Activated T-helper 1 cell treated with anti-CD3 and anti-CD28 coated beads, Interleukin-12 subunit alpha, Interleukin-12 subunit beta, Interleukin-2, Interleukin-4 antibody, amounts not matched to agents 30 ng/mL and 10 ng/mL and 1 ng/mL, durations not matched to agents 14 hours and 24 hours and 36 hours (primary cell): ENCODE measurements at regions of chr11 and their contacts with region 1.

Region 1: GRCh38 chr11:69238573-69239351 is 55.2 kb upstream of the MYEOV start:
- DNase-seq: no peak
- H3K4me3 Mint-ChIP-seq: peak overlapping the region; percentile 55
- H3K27ac Mint-ChIP-seq: peak overlapping the region; percentile 94
- H3K4me1 Mint-ChIP-seq: peaks cover 34% of the 10 kb centered on the region
- H3K27me3 Mint-ChIP-seq: peaks cover 6% of the 10 kb centered on the region

Region 2: GRCh38 chr11:69101115-69101791 is 137.5 kb before region 1 on chr11:
- intact Hi-C with region 1: loop called (anchors 2 kb)
- DNase-seq: peak; percentile 53
- H3K4me3 Mint-ChIP-seq: no peak overlapping the region
- H3K27ac Mint-ChIP-seq: no peak overlapping the region
- H3K4me1 Mint-ChIP-seq: no peaks in the 10 kb centered on the region
- H3K27me3 Mint-ChIP-seq: no peaks in the 10 kb centered on the region

Region 3: DNA sequence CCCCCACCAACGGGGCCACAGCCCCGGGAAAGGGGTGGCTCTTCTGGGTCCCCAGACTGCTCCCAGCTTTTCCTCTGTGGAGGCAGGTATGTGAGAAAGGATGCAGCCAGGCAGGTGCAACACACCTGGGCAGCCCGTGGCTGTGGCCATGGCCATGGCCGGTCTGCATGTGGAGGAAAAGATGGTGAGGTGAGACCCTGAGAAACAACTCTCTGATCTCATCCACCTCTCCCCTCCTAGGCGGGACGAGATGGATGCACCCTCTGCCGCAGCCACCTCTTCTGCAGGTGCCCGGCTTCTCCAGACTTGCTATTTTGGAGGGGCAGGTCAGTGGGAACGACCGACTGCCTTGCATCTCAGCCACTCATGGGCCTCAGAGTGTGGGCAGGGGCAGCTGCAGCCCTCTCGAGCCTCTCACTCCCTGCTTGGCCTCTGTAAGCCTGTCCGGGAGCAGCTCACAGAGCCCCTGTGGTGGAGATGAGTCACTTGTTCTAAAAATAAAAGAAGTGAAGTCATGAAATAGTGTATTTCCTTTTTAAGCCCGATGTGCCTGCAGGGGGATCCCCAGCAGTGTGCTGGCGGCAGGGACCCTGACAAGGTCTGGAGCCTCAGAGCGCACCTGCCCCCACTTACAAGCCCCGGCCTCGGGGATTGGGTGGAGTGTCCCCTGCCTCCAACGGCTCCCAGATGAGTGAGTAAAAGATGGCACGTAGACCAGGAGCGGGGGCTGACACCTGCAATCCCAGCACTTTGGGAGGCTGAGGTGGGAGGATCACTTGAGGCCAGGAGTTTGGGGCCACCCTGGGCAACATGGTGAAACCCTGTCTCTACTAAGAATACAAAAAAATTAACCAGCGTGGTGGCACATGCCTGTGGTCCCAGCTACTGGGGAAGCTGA is 72.3 kb before region 1 on chr11:
- intact Hi-C with region 1: loop called (anchors 2 kb)
- DNase-seq: peak; percentile 17
- H3K4me3 Mint-ChIP-seq: peak overlapping the region; percentile 67
- H3K27ac Mint-ChIP-seq: peak overlapping the region; percentile 90
- H3K4me1 Mint-ChIP-seq: peaks cover 24% of the 10 kb centered on the region
- H3K27me3 Mint-ChIP-seq: peaks cover 2% of the 10 kb centered on the region

Region 4: GRCh38 chr11:69296890-69297786 is 58.4 kb after region 1 on chr11:
- intact Hi-C with region 1: loop called (anchors 1 kb)
- DNase-seq: peak; percentile 77
- H3K4me3 Mint-ChIP-seq: peak overlapping the region; percentile 82
- H3K27ac Mint-ChIP-seq: peak overlapping the region; percentile 97
- H3K4me1 Mint-ChIP-seq: peaks cover 64% of the 10 kb centered on the region
- H3K27me3 Mint-ChIP-seq: peaks cover 6% of the 10 kb centered on the region

Region 5: DNA sequence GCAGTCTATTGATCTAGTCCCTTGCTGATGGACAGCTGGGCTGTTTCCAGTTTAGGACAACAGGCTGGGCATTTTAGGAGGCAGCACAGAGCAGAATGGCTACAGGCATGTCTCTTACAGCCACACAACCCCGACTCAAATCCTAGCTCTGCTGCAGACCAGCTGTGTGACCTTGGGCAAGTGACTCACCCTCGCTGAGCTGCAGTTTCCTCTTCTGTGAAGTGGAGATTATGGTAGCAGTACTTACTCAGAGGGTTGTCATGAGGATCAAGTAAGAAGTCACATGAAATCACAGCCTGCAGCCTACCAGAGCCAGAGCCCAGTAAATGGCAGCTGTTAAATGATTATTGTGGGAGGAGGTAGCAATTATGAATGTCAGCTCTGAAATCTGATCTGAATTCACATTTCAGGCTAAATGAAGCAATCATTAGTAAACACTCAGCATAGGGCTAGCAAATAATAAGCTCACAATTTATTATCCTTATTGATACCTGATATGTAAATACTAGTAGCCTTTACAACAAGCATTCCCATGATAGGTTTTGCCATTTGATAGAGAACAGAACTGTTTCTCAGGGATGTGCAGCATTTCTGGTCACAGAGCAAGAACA is 114.1 kb after region 1 on chr11:
- intact Hi-C with region 1: loop called (anchors 5 kb)
- DNase-seq: no peak
- H3K4me3 Mint-ChIP-seq: no peak overlapping the region
- H3K27ac Mint-ChIP-seq: peak overlapping the region; percentile 43
- H3K4me1 Mint-ChIP-seq: peaks cover 10% of the 10 kb centered on the region
- H3K27me3 Mint-ChIP-seq: peaks cover 1% of the 10 kb centered on the region

Region 6: GRCh38 chr11:69384548-69385460 is 146.0 kb after region 1 on chr11:
- intact Hi-C with region 1: no loop called
- DNase-seq: no peak
- H3K4me3 Mint-ChIP-seq: no peak overlapping the region
- H3K27ac Mint-ChIP-seq: no peak overlapping the region
- H3K4me1 Mint-ChIP-seq: no peaks in the 10 kb centered on the region
- H3K27me3 Mint-ChIP-seq: peaks cover 4% of the 10 kb centered on the region

Region 7: GRCh38 chr11:69417146-69418085 is 178.7 kb after region 1 on chr11:
- intact Hi-C with region 1: no loop called
- DNase-seq: no peak
- H3K4me3 Mint-ChIP-seq: no peak overlapping the region
- H3K27ac Mint-ChIP-seq: no peak overlapping the region
- H3K4me1 Mint-ChIP-seq: no peaks in the 10 kb centered on the region
- H3K27me3 Mint-ChIP-seq: no peaks in the 10 kb centered on the region

Region 8: GRCh38 chr11:69642913-69643632 is 404.3 kb after region 1 on chr11:
- intact Hi-C with region 1: loop called (anchors 2 kb)
- DNase-seq: peak; percentile 62
- H3K4me3 Mint-ChIP-seq: peak overlapping the region; percentile 73
- H3K27ac Mint-ChIP-seq: no peak overlapping the region
- H3K4me1 Mint-ChIP-seq: no peaks in the 10 kb centered on the region
- H3K27me3 Mint-ChIP-seq: peaks cover 24% of the 10 kb centered on the region

Region 9: GRCh38 chr11:70202898-70203748 is 964.4 kb after region 1 on chr11 and contains the start of gene FADD:
- intact Hi-C with region 1: loop called (anchors 5 kb)
- DNase-seq: peak; percentile 89
- H3K4me3 Mint-ChIP-seq: peak within 1 kb of the TSS; percentile 99
- H3K27ac Mint-ChIP-seq: peak within 1 kb of the TSS; percentile 99
- H3K4me1 Mint-ChIP-seq: peaks cover 37% of the 10 kb centered on the region
- H3K27me3 Mint-ChIP-seq: peaks cover 9% of the 10 kb centered on the region
- total RNA-seq, gene FADD: 47.9 and 51.8 TPM in 2 replicates